Activated T-helper 2 cell treated with anti-CD3 and anti-CD28 coated beads, Interferon-gamma antibody, Interleukin-2, Interleukin-4, amounts not matched to agents 10 μg/mL and 5 μg/mL and 100 μg/mL, durations not matched to agents 14 hours and 24 hours and 36 hours (primary cell): ENCODE measurements at regions of chr5 and their contacts with region 1.

Region 1: GRCh38 chr5:91059409-91059808 is 323.7 kb downstream of the ARRDC3 start:
- DNase-seq: no peak
- H3K4me3 Mint-ChIP-seq: no peak overlapping the region
- H3K27ac Mint-ChIP-seq: no peak overlapping the region
- H3K4me1 Mint-ChIP-seq: peaks cover 16% of the 10 kb centered on the region
- H3K27me3 Mint-ChIP-seq: peaks cover 26% of the 10 kb centered on the region

Region 2: DNA sequence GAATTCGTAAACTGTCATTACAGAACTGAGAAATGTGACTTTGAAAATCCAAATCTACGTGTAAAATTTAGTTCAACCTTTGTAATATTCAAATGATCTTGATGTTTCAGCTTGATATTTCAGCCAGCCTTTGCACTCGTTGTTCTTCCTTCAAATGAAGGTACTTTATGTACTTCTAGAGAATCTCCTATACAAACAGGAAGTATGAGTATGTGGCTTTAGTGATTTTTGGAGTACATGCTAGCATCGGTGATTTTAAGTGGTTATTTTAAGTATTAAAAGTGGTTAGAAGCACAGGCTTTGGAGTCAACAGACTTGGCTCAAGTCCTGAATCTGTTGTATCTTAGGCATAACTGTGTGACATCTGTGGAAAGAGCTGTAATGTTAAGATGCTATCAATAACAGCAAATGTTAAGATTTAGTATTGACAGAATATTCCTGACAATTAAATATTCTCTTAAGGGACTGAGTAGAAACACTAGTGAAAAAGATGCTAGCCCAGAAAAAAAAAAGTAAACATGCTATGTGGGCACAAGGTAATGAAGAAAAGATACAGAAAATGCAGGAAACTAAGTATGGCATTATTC is 102.8 kb before region 1 on chr5:
- intact Hi-C with region 1: loop called (anchors 5 kb)
- DNase-seq: no peak
- H3K4me3 Mint-ChIP-seq: peak overlapping the region; percentile 1
- H3K27ac Mint-ChIP-seq: peak overlapping the region; percentile 91
- H3K4me1 Mint-ChIP-seq: peaks cover 22% of the 10 kb centered on the region
- H3K27me3 Mint-ChIP-seq: no peaks in the 10 kb centered on the region

Region 3: DNA sequence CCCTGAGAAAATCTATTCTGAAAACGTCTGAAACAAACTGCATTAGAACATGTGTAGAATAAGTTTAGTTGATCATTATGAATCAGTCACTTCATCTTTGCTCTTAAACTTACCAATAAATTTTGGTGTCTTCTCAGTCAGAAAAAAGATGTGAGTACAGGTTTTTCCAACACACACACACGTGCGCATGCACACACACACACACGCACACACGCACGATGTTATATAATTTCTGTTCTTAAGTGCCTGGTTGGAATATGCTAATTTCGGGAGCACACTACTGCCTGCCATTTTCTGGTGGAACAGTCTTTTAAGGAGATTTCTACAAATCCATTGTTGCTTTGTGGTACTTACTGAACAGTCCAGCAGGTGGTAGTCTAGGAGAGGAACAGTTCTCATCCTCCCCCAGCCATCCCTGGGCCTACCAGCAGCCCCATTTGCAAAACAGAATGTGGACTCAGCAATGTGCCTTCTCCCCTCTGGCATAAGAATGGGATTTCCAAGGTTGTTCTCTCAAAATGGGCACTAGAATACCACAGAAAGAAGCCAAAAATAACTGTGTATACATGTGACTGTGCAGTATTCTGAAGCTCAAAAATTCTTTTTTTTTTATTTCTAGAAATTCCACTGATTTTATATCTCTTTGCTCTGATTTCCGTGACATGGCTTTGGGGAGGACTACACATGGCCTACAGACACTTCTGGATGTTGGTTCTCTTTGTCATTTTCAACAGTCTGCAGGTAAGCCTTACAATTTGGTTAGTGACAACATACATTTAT is 42.4 kb after region 1 on chr5:
- intact Hi-C with region 1: no loop called
- DNase-seq: peak; percentile 33
- H3K4me3 Mint-ChIP-seq: no peak overlapping the region
- H3K27ac Mint-ChIP-seq: no peak overlapping the region
- H3K4me1 Mint-ChIP-seq: peaks cover 2% of the 10 kb centered on the region
- H3K27me3 Mint-ChIP-seq: peaks cover 9% of the 10 kb centered on the region